ENCODE measurements at regions of chr6 and their contacts with region 1.

Region 1: DNA sequence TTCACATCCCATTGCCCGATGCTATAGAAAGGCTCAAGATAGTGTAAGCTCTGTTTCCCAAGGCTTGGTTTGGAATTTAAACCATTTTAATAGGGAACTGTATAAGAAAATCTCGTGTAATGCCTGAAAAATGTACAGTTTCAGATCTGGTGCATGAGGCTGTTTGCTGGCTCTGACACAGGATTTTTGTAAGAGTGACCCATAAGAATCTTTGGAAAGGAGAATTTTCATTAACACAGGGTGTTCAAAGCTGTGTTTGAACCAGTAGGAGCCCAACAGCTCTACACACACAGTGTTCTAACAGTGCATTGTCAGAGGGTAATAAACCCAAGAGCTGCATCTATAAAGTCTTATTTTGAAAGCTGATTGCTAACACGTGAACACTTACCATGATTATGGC is 293.5 kb downstream of the PRL start:
- DNase-seq: no peak
- H3K4me3 ChIP-seq: no peak overlapping the region
- H3K27ac ChIP-seq: no peak overlapping the region
- H3K27me3 ChIP-seq: no peaks in the 10 kb centered on the region
- CTCF ChIP-seq: no peak

Region 2: DNA sequence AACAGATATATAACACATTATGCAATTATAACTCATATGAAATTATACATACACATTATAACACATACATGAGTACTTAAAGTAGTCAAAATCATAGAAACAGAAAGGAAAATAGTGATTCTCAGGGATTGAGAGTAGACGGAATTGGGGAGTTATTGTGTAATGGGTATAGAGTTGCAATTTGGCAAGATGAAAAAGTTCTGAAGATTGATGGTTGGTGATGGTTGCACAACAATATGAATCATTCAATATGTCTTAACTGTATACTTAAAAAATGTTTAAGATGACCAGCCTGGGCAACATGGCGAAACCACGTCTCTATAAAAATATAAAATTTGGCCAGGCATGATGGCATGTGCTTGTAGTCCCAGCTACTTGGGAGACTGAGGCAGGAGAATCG is 1096.3 kb before region 1 on chr6:
- CTCF ChIA-PET with region 1: no interaction called
- POLR2A ChIA-PET with region 1: no interaction called
- DNase-seq: peak; percentile 56
- H3K4me3 ChIP-seq: no peak overlapping the region
- H3K27ac ChIP-seq: no peak overlapping the region
- H3K27me3 ChIP-seq: no peaks in the 10 kb centered on the region
- CTCF ChIP-seq: no peak

Region 3: GRCh38 chr6:21965016-21965415 is 38.3 kb before region 1 on chr6:
- CTCF ChIA-PET with region 1: no interaction called
- POLR2A ChIA-PET with region 1: no interaction called
- DNase-seq: no peak
- H3K4me3 ChIP-seq: no peak overlapping the region
- H3K27ac ChIP-seq: no peak overlapping the region
- H3K27me3 ChIP-seq: no peaks in the 10 kb centered on the region
- CTCF ChIP-seq: no peak

Region 4: GRCh38 chr6:21992178-21992967 is 10.9 kb before region 1 on chr6:
- CTCF ChIA-PET with region 1: interaction called, 3 read pairs
- POLR2A ChIA-PET with region 1: interaction called, 13 read pairs
- DNase-seq: no peak
- H3K4me3 ChIP-seq: no peak overlapping the region
- H3K27ac ChIP-seq: no peak overlapping the region
- H3K27me3 ChIP-seq: no peaks in the 10 kb centered on the region
- CTCF ChIP-seq: no peak